ENCODE measurements at regions of chr22 and their contacts with region 1.

Region 1: DNA sequence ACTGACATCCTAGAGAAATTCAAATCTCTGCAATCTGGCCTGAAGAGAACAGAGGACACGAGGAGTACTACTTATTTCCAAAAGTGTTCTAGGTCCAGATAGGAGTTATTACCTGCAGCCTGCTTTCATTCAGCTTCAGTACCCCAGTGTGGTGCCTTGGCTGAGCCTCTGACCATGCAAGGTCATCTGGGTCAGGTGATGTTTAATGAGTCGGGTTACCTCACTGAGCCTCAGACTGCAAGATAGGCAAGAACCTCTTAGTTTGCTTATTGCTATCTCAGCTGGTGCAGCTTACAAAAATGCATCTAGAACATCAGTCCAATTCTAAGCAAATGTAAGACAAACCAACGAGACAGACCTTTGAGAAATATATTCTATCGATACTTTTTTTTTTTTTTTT is 9.5 kb upstream of the NF2 start:
- DNase-seq: peak; percentile 61
- ATAC-seq: peak; percentile 70
- H3K4me3 ChIP-seq: no peak overlapping the region
- H3K27ac ChIP-seq: no peak overlapping the region
- H3K4me1 ChIP-seq: peaks cover 37% of the 10 kb centered on the region
- H3K27me3 ChIP-seq: no peaks in the 10 kb centered on the region
- CTCF ChIP-seq: no peak
- EP300 ChIP-seq: no peak
- POLR2A ChIP-seq: no peak
- RAD21 ChIP-seq: no peak

Region 2: GRCh38 chr22:29503811-29504372 is 90.0 kb before region 1 on chr22:
- CTCF ChIA-PET with region 1: no interaction called
- POLR2A ChIA-PET with region 1: no interaction called
- in situ Hi-C with region 1: no loop called
- intact Hi-C with region 1: no loop called
- DNase-seq: no peak
- ATAC-seq: no peak; the same call in 2 of the 3 replicates
- H3K4me3 ChIP-seq: no peak overlapping the region
- H3K27ac ChIP-seq: no peak overlapping the region
- H3K4me1 ChIP-seq: peaks cover 18% of the 10 kb centered on the region
- H3K27me3 ChIP-seq: no peaks in the 10 kb centered on the region
- CTCF ChIP-seq: no peak
- EP300 ChIP-seq: no peak
- POLR2A ChIP-seq: no peak
- RAD21 ChIP-seq: no peak

Region 3: GRCh38 chr22:29569011-29569678 is 24.8 kb before region 1 on chr22:
- CTCF ChIA-PET with region 1: no interaction called
- POLR2A ChIA-PET with region 1: interaction called, 19 read pairs
- in situ Hi-C with region 1: no loop called
- intact Hi-C with region 1: no loop called
- DNase-seq: peak; percentile 65
- ATAC-seq: peak; percentile 69
- H3K4me3 ChIP-seq: no peak overlapping the region
- H3K27ac ChIP-seq: peak overlapping the region; percentile 62
- H3K4me1 ChIP-seq: peaks cover 57% of the 10 kb centered on the region
- H3K27me3 ChIP-seq: no peaks in the 10 kb centered on the region
- CTCF ChIP-seq: 0 out of 2 replicates have a peak, but pooled peaks have one; percentile 14
- EP300 ChIP-seq: peak in 1 of 2 experiments; percentile 58; a peak in 1 of 4 replicates
- POLR2A ChIP-seq: no peak
- RAD21 ChIP-seq: no peak

Region 4: DNA sequence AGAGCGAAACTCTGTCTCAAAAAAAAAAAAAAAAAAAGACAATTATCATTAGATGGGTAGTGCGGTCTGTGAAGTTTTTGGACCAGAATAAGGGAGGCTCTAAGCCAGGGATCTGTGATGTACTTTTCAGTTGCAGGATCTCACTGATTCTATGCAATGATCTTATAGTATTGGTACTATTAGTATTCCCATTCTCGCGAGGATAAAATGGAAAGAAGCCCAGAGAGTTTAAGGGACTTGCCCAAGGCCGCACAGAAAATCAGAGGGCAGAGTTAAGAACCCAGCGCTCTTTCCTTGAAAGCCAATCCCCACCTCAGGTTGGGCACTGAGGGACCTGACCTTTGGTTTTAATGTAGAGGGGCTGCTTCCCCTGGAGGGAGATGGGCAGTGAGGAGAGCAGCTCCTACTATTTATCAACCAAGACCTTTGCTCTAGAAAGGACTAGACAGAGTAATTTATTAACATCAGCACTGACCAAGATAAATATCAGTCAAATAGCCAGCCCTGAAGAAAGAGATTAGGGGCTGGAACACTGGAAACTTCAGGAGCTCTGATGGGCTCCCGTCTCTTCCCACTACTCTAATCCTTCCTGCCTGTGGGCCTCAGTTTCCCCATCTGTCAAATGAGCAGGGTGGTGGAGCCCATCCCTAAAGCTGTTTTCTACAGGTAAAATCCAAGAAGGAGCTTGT is 19.0 kb before region 1 on chr22:
- CTCF ChIA-PET with region 1: no interaction called
- POLR2A ChIA-PET with region 1: interaction called, 48 read pairs
- in situ Hi-C with region 1: no loop called
- intact Hi-C with region 1: no loop called
- DNase-seq: peak; percentile 81
- ATAC-seq: peak; percentile 85
- H3K4me3 ChIP-seq: peak overlapping the region in 2 of 3 experiments; percentile 45 to 47; a peak in 2 of 6 replicates
- H3K27ac ChIP-seq: peak overlapping the region; percentile 90
- H3K4me1 ChIP-seq: peaks cover 95% of the 10 kb centered on the region
- H3K27me3 ChIP-seq: no peaks in the 10 kb centered on the region
- CTCF ChIP-seq: no peak
- EP300 ChIP-seq: no peak
- POLR2A ChIP-seq: peak; percentile 43 to 52; a peak in 2 of 4 replicates
- RAD21 ChIP-seq: no peak

Region 5: GRCh38 chr22:29580200-29580810 is 13.6 kb before region 1 on chr22:
- CTCF ChIA-PET with region 1: no interaction called
- POLR2A ChIA-PET with region 1: interaction called, 48 read pairs
- in situ Hi-C with region 1: no loop called
- intact Hi-C with region 1: no loop called
- DNase-seq: peak; percentile 92
- ATAC-seq: peak; percentile 92
- H3K4me3 ChIP-seq: peak overlapping the region; percentile 65 to 98 (median 83)
- H3K27ac ChIP-seq: peak overlapping the region; percentile 99
- H3K4me1 ChIP-seq: peaks cover 82% of the 10 kb centered on the region
- H3K27me3 ChIP-seq: no peaks in the 10 kb centered on the region; a peak in 1 of 5 replicates
- CTCF ChIP-seq: peak; percentile 35
- EP300 ChIP-seq: peak in 1 of 2 experiments; percentile 35; a peak in 2 of 4 replicates
- POLR2A ChIP-seq: peak; percentile 96 to 99
- RAD21 ChIP-seq: peak; percentile 72